ENCODE measurements at regions of chr4 and their contacts with region 1.

Region 1: GRCh38 chr4:70839589-70840093 is at the start of gene GRSF1:
- DNase-seq: peak; percentile 44
- H3K4me3 ChIP-seq: peak within 1 kb of the TSS; percentile 75
- H3K27me3 ChIP-seq: no peaks in the 10 kb centered on the region
- CTCF ChIP-seq: no peak
- polyA plus RNA-seq, gene GRSF1: 41.9 and 69.2 TPM in 2 replicates

Region 2: GRCh38 chr4:70783096-70783495 is 56.5 kb before region 1 on chr4:
- CTCF ChIA-PET with region 1: no interaction called
- POLR2A ChIA-PET with region 1: no interaction called
- DNase-seq: no peak
- H3K4me3 ChIP-seq: no peak overlapping the region
- H3K27me3 ChIP-seq: no peaks in the 10 kb centered on the region
- CTCF ChIP-seq: no peak

Region 3: DNA sequence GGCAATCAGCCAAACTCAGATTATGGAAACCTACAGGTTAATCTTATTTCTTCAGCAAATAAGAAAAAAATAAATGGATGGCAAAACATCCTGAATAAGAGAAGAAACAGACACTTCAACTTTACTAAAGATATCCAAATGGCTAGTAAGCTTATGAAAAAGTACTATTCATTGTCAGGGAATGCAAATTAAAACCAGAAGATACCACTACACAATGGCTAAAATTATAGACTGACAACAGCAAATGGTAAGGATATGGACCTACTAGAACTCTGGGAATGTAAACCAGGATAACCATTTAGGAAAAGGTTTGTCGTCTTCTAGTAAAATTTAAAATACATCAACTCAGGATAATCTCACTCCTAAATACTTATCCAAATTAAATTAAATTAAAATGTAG is 24.3 kb before region 1 on chr4:
- CTCF ChIA-PET with region 1: interaction called, 3 read pairs
- POLR2A ChIA-PET with region 1: interaction called, 21 read pairs
- DNase-seq: no peak
- H3K4me3 ChIP-seq: no peak overlapping the region
- H3K27me3 ChIP-seq: no peaks in the 10 kb centered on the region
- CTCF ChIP-seq: no peak

Region 4: DNA sequence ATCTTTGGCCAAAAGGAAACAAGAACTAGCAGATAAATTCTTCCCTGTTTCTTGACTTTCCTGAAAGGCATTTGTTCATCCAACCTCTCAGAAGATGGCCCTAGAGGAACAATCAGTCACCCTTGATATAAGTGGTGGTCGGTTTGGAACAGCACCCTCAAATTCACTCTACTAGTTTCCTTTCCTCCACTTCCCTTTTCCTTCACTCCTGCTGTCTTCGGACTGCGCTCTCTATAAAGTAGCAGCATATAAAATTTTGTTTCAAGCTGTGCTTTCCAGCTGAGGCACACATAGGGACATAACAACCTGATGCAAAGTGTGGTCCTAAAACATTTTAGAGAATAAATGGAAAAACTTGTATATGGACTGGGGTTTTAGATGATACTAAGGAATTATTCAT is 33.6 kb after region 1 on chr4:
- CTCF ChIA-PET with region 1: interaction called, 3 read pairs
- POLR2A ChIA-PET with region 1: interaction called, 13 read pairs
- DNase-seq: no peak
- H3K4me3 ChIP-seq: no peak overlapping the region
- H3K27me3 ChIP-seq: no peaks in the 10 kb centered on the region
- CTCF ChIP-seq: no peak

Measured in BJ (cell line).